Mammary epithelial cell (primary cell): ENCODE measurements at regions of chr17 and their contacts with region 1.

Region 1: GRCh38 chr17:82974136-82974952 is 105.1 kb upstream of the METRNL start:
- DNase-seq: no peak
- H3K4me3 ChIP-seq: no peak overlapping the region
- H3K27ac ChIP-seq: no peak overlapping the region
- H3K4me1 ChIP-seq: no peaks in the 10 kb centered on the region
- H3K27me3 ChIP-seq: no peaks in the 10 kb centered on the region
- CTCF ChIP-seq: no peak

Region 2: DNA sequence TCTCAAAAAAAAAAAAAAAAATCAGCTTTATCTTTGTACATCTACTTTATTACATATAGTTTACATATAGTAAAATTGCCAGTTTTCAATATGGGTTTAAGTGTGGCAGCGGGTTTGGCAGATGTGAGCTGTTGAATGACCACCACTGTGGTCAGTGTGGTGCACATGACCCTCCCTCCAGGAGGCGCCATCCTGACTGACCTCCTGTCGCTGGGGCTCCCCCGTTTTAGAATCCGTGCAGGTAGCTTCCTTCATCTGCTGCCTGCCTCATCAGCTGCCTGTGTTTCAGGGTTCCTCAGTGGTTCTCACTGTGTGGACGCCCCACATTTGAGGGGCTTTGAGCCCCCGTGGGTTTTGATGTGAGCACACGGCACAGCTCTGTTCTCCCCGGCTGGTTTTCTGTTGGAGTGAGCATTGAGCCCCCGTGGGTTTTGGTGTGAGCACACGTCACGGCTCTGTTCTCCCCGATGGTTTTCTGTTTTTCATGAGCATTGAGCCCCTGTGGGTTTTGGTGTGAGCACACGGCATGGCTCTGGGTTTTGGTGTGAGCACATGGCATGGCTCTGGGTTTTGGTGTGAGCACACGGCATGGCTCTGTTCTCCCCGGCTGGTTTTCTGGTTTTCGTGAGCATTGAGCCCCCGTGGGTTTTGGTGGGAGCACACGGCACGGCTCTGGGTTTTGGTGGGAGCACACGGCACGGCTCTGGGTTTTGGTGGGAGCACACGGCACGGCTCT is 76.7 kb before region 1 on chr17:
- CTCF ChIA-PET with region 1: no interaction called
- dilution Hi-C with region 1: loop called (anchors 5 kb)
- in situ Hi-C with region 1: no loop called
- intact Hi-C with region 1: no loop called
- DNase-seq: no peak
- H3K4me3 ChIP-seq: no peak overlapping the region
- H3K27ac ChIP-seq: no peak overlapping the region
- H3K4me1 ChIP-seq: no peaks in the 10 kb centered on the region
- H3K27me3 ChIP-seq: no peaks in the 10 kb centered on the region
- CTCF ChIP-seq: no peak

Region 3: GRCh38 chr17:82924798-82925197 is 49.5 kb before region 1 on chr17:
- CTCF ChIA-PET with region 1: no interaction called
- dilution Hi-C with region 1: loop called (anchors 5 kb)
- in situ Hi-C with region 1: no loop called
- intact Hi-C with region 1: no loop called
- DNase-seq: peak; percentile 30
- H3K4me3 ChIP-seq: no peak overlapping the region
- H3K27ac ChIP-seq: no peak overlapping the region
- H3K4me1 ChIP-seq: no peaks in the 10 kb centered on the region
- H3K27me3 ChIP-seq: no peaks in the 10 kb centered on the region
- CTCF ChIP-seq: no peak

Region 4: GRCh38 chr17:83012868-83013778 is 38.8 kb after region 1 on chr17:
- CTCF ChIA-PET with region 1: no interaction called
- dilution Hi-C with region 1: loop called (anchors 5 kb)
- in situ Hi-C with region 1: no loop called
- intact Hi-C with region 1: no loop called
- DNase-seq: peak; percentile 52
- H3K4me3 ChIP-seq: no peak overlapping the region
- H3K27ac ChIP-seq: no peak overlapping the region
- H3K4me1 ChIP-seq: no peaks in the 10 kb centered on the region
- H3K27me3 ChIP-seq: no peaks in the 10 kb centered on the region
- CTCF ChIP-seq: no peak

Region 5: GRCh38 chr17:83055911-83056582 is 81.7 kb after region 1 on chr17:
- CTCF ChIA-PET with region 1: no interaction called
- dilution Hi-C with region 1: no loop called
- in situ Hi-C with region 1: no loop called
- intact Hi-C with region 1: no loop called
- DNase-seq: peak; percentile 62
- H3K4me3 ChIP-seq: no peak overlapping the region
- H3K27ac ChIP-seq: no peak overlapping the region
- H3K4me1 ChIP-seq: peaks cover 13% of the 10 kb centered on the region
- H3K27me3 ChIP-seq: no peaks in the 10 kb centered on the region
- CTCF ChIP-seq: no peak